Activated CD4-positive, alpha-beta T cell treated with anti-CD3 and anti-CD28 coated beads for 36 hours (primary cell): ENCODE measurements at regions of chr7 and their contacts with region 1.

Region 1: DNA sequence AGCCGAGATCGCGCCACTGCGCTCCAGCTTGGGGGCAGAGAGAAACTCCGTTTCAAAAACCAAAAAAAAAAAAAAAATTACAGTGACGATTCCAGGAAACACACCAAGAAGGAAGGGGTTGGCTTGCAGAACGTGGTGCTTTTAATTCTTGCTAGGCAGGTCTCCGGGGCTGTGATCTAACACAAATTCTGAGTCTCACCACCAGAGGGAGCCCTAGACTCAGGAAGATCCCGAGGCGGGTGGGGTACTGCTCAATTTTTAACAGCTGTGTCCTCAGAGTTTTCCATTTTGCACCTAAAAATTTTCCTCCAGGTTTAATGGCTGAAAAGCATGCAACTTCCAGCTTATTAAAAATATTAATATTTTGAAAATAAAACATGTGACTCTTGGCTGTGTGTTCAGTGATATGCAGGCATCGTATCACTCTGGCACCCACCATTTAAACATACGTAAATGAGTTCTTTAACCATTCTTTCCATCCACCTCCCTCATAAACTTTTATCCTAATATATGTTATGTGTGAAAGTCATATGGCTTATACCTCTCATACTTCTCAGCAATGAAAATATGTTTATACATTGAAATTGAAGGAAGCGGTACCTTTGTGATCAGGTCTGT is 26.5 kb upstream of the NUB1 start:
- DNase-seq: peak; percentile 83
- ATAC-seq: peak; percentile 77
- H3K4me3 Mint-ChIP-seq: no peak overlapping the region
- H3K27ac Mint-ChIP-seq: no peak overlapping the region
- H3K4me1 Mint-ChIP-seq: peaks cover 12% of the 10 kb centered on the region
- H3K27me3 Mint-ChIP-seq: no peaks in the 10 kb centered on the region

Region 2: DNA sequence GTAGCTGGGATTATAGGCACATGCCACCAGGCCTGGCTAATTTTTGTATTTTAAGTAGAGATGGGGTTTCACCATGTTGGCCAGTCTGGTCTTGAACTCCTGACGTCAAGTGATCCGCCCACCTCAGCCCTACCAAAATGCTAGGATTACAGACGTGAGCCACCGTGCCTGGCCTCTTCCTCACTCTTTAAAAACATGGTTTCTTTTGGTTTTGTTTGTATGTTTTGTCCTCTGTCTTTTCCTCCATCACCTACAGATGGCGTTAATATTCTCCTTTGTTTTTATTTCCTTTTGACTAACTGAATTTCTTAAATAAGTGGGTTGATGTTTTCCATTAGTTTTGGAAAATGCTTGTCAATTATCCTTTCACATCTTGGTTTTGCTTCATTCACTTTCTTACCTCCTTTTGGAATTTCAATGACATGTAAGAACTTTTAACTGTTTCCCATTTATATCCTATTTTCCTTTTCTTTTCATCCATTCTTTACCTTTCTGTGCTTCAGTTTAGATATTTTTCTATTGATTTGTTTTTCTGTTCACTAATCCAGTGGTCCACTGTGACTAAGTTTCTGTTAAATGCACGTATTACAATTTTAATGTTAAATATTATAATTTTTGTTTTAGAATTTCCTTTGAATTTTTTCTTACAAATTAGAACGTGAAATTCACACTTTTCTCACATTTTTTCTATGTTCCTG is 1645.9 kb before region 1 on chr7:
- CTCF ChIA-PET with region 1: no interaction called
- POLR2A ChIA-PET with region 1: no interaction called
- intact Hi-C with region 1: no loop called
- DNase-seq: peak; percentile 36
- ATAC-seq: no peak
- H3K4me3 Mint-ChIP-seq: no peak overlapping the region
- H3K27ac Mint-ChIP-seq: no peak overlapping the region
- H3K4me1 Mint-ChIP-seq: peaks cover 2% of the 10 kb centered on the region
- H3K27me3 Mint-ChIP-seq: peaks cover 35% of the 10 kb centered on the region

Region 3: GRCh38 chr7:150924369-150924781 is 390.8 kb before region 1 on chr7:
- CTCF ChIA-PET with region 1: no interaction called
- POLR2A ChIA-PET with region 1: no interaction called
- intact Hi-C with region 1: no loop called
- DNase-seq: no peak
- ATAC-seq: no peak
- H3K4me3 Mint-ChIP-seq: no peak overlapping the region
- H3K27ac Mint-ChIP-seq: no peak overlapping the region
- H3K4me1 Mint-ChIP-seq: peaks cover 15% of the 10 kb centered on the region
- H3K27me3 Mint-ChIP-seq: peaks cover 5% of the 10 kb centered on the region

Region 4: DNA sequence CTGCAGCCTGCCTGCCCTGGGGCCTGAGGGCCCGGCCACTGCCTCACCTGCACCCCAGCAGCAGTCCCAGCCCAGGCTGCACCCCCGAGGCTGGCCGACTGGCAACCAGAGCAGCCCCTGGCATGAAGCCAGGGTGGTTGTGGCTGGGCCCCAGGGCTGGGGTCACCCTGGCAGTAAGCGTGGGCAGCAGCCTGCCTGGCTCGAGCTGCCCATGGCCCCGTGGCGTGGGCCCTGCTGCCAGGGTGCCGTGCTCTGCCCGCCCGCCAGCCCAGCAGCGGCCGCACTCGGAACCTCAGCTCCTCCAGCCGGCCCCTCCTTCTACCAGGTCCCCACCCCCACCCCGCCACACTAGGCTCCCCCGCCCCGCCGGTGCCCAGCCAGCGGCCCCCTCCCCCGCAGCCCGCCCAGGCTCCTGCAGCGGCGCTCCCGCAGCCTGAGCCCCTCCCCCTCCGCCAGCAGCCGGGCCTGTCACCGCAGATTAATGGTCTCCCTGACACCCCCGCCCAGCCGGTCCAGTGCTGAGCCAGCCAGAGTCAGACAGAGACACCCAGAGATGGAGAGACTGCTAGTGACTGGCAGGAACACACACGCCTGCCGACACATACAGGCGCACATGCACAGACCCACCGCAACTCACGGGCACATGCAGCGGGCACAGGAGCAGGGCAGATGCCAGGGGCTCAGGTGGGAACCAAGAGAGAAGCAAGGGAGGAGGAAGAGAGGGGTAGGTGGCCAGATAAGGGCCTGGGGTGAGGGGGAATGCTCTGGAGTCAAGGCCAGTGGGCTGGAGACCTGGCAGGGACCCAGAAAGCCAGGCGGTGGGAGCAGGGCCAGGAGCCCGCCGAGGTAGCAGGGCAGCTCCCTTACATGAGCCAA is 359.4 kb before region 1 on chr7:
- CTCF ChIA-PET with region 1: no interaction called
- POLR2A ChIA-PET with region 1: no interaction called
- intact Hi-C with region 1: no loop called
- DNase-seq: no peak
- ATAC-seq: no peak
- H3K4me3 Mint-ChIP-seq: no peak overlapping the region
- H3K27ac Mint-ChIP-seq: no peak overlapping the region
- H3K4me1 Mint-ChIP-seq: peaks cover 15% of the 10 kb centered on the region
- H3K27me3 Mint-ChIP-seq: peaks cover 35% of the 10 kb centered on the region

Region 5: DNA sequence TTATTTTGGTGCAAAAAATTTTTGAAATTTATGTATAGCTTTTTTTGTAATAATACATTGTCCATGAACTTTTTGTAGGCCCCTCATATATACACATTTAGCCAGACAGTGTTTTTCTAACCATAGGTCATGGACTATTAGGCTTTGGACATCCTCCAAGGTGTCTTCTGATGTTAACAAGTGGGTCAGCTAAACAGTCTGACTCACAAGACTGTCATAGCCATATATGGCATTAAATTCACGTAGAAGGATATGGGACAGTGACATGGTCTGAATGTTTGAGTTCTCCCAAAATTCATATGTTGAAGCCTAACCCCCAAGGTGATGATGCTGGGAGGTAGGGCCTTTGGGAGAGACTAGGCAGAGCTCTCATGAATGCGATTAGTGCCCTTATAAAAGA is 12.5 kb after region 1 on chr7:
- CTCF ChIA-PET with region 1: interaction called, 29 read pairs
- POLR2A ChIA-PET with region 1: interaction called, 3 read pairs
- intact Hi-C with region 1: no loop called
- DNase-seq: no peak
- ATAC-seq: no peak
- H3K4me3 Mint-ChIP-seq: no peak overlapping the region
- H3K27ac Mint-ChIP-seq: no peak overlapping the region
- H3K4me1 Mint-ChIP-seq: no peaks in the 10 kb centered on the region
- H3K27me3 Mint-ChIP-seq: no peaks in the 10 kb centered on the region

Region 6: DNA sequence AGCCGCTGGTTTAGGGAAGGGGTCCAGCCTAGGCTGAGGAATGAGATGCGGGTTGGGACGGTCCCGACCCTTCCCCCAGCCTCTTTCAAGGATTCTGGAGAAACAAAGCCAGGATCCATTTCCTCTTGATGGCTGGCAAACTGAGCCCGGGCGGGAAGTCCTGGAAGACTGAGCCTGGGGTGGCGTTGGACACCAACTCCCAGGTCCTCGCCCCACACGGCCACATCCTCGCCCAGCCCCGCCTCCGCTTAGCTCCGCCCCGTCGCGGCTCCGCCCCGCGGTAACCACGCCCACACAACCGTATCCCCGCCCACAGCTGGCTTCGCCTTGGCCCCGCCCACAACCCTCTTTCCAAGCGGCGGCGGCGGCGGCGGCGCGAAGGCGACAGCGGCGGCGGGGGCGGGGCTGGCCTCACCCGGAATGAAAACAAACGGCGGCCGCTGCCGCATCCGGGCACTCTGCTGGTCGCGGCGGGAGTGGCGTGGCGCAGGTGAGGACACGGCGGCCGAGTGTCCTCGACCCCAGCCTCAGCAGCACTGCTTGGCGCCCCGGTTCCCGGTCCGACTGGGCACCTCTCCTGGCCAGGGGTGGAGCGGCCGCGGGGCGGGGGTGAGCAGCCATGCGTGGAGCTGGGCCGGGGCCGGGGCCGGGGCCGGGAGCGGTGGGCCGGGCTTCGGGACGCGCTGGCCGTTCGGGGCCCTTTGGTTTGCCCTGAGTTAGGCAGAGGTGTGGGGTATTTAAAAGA is 26.4 kb after region 1 on chr7 and contains the start of gene NUB1:
- CTCF ChIA-PET with region 1: interaction called, 34 read pairs
- POLR2A ChIA-PET with region 1: no interaction called
- intact Hi-C with region 1: loop called in 1 of 2 experiments (anchors 1 kb)
- DNase-seq: peak; percentile 96
- ATAC-seq: peak; percentile 82
- H3K4me3 Mint-ChIP-seq: peak within 1 kb of the TSS; percentile 76
- H3K27ac Mint-ChIP-seq: peak within 1 kb of the TSS; percentile 78
- H3K4me1 Mint-ChIP-seq: peaks cover 46% of the 10 kb centered on the region
- H3K27me3 Mint-ChIP-seq: no peaks in the 10 kb centered on the region
- total RNA-seq, gene NUB1: 51.4 to 70.4 TPM

Region 7: GRCh38 chr7:151448261-151449252 is 133.4 kb after region 1 on chr7:
- CTCF ChIA-PET with region 1: interaction called, 31 read pairs
- POLR2A ChIA-PET with region 1: no interaction called
- intact Hi-C with region 1: loop called (anchors 1 kb)
- DNase-seq: peak; percentile 87
- ATAC-seq: peak; percentile 79
- H3K4me3 Mint-ChIP-seq: peak overlapping the region; percentile 59
- H3K27ac Mint-ChIP-seq: no peak overlapping the region
- H3K4me1 Mint-ChIP-seq: peaks cover 12% of the 10 kb centered on the region
- H3K27me3 Mint-ChIP-seq: peaks cover 4% of the 10 kb centered on the region

Region 8: GRCh38 chr7:151900986-151901621 is 586.0 kb after region 1 on chr7:
- CTCF ChIA-PET with region 1: no interaction called
- POLR2A ChIA-PET with region 1: no interaction called
- intact Hi-C with region 1: no loop called
- DNase-seq: no peak
- ATAC-seq: no peak
- H3K4me3 Mint-ChIP-seq: no peak overlapping the region
- H3K27ac Mint-ChIP-seq: no peak overlapping the region
- H3K4me1 Mint-ChIP-seq: no peaks in the 10 kb centered on the region
- H3K27me3 Mint-ChIP-seq: peaks cover 19% of the 10 kb centered on the region